ENCODE measurements at regions of chr17 and their contacts with region 1.

Region 1: GRCh38 chr17:40791787-40792436 is 7.8 kb downstream of the KRT28 start:
- DNase-seq: peak in 1 of 2 experiments; percentile 59
- H3K4me3 ChIP-seq: no peak overlapping the region
- H3K4me1 ChIP-seq: no peaks in the 10 kb centered on the region
- H3K27me3 ChIP-seq: peaks cover 6% of the 10 kb centered on the region

Region 2: DNA sequence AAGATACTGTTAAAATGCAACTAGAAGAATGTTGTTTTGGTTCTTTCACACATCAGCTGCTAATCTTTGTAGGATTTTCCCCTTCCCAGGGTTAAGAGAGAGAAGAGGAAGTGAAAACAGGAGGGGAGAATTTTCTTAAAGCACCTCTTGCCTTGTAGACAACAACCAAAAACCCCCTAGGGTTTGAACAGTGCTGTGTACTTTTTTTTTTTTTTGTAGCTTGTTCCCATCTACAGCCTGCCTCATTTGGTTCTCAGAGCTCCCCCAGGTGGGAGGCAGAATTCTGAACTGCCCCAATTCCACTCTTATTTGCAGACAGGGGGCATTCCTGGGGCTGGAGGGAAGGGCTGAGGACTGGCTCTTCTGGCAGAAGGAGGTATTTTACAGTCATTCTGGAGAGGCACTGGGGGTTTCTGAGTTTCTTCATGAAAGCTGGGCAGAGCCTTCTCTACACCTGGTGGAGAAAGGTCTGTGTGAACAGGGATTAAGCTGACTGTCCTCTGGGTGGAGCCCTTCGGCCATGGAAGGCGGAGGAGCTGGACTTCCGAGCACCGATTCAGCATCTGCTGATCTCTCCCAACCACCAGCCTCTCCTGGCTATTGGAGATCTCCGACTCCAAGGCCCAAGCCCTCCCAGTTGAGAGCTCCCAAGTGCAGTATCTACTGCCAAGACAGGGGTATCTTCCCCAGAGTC is 176.5 kb before region 1 on chr17:
- in situ Hi-C with region 1: loop called (anchors 5 kb)
- DNase-seq: peak; percentile 49 to 72
- H3K4me3 ChIP-seq: no peak overlapping the region
- H3K4me1 ChIP-seq: no peaks in the 10 kb centered on the region
- H3K27me3 ChIP-seq: peaks cover 10% of the 10 kb centered on the region; the same call in 1 of the 2 replicates

Measured in HAP-1 (cell line).